Calu3 (cell line): ENCODE measurements at regions of chr3 and their contacts with region 1.

Region 1: DNA sequence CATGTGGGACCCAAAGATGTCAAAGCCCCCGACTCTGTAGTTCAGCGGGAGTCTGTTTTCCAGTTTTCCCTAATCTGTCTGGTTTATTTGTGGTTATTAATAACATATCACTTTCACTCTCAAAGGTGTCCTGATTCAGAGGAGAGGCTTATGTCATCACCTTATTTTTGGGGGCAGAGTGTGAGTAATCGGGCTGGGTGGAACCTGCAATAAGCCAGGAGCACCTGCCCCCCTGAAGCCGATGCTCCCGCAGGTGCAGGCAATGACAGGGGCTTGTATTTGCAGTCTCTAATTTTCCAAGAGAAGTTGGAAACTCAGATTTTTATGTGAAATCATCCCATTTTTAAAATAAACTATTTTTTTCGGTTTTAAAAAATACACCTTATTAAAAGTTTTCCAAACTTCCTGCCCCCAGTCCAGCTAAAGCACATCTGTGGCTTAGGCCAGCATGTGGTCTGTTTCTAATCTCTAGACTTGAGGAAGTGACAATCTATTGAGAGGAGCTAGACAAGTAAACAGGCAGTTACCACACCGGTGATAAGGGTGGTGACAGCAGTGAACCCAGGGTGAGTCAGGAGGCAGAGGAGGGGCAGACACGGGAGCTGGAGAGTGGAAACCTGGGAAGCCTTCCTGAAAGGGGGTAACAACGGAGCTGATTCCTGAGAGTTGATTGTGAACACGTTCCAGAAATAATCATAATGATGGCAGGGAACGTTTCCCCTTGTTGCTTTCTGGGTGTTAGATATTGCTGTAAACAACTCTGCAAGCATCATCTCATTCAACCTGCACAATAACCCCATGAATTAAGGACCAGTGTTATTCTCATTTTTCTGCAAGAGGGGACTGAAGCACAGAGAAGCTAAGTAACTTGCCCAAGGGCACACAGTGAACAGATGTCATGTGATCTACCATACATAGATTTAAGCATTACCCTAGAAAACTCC is 37.3 kb downstream of the BHLHE40 start:
- DNase-seq: peak; percentile 74
- H3K4me3 Mint-ChIP-seq: peak overlapping the region; percentile 41
- H3K27ac Mint-ChIP-seq: peak overlapping the region; percentile 97
- H3K4me1 Mint-ChIP-seq: peaks cover 79% of the 10 kb centered on the region
- H3K27me3 Mint-ChIP-seq: no peaks in the 10 kb centered on the region
- CTCF ChIP-seq: no peak

Region 2: GRCh38 chr3:4986782-4987537 is 29.5 kb before region 1 on chr3:
- CTCF ChIA-PET with region 1: interaction called, 13 read pairs
- intact Hi-C with region 1: no loop called
- DNase-seq: peak; percentile 97
- H3K4me3 Mint-ChIP-seq: peak overlapping the region; percentile 76
- H3K27ac Mint-ChIP-seq: peak overlapping the region; percentile 97
- H3K4me1 Mint-ChIP-seq: peaks cover 34% of the 10 kb centered on the region
- H3K27me3 Mint-ChIP-seq: no peaks in the 10 kb centered on the region
- CTCF ChIP-seq: no peak

Region 3: DNA sequence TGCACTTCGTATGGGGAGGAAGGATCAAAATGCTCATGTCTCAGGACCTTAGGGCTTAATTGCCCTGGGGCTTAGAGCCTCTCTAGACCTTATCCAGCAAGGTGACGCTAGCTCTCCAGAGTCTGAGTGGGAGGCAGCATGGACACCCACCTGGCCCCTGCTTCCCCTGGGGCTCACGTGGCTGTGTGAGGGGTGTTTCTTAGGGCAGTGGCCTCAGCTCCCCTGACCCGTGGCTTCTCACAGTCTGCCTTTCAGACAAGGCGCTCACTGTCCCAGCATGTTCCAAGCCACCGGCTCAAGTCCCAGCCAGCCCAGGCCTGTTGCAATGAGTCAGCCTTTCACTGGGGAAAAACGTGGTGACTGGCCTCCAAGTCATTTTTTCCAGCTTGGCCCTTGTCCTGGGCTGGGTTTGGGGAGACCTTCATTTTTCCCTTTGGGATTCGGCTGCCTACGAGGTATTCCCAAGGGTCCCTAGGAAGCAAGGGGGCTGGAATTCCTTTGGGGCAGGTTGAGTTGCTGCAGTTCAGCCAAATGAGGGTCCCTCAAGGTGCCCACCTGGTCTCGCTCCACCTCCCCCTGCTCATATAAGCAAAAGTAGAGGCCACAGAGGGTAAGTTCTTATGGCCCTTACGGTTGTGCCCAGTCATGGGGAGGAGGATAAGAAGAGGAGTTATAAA is 21.5 kb before region 1 on chr3:
- CTCF ChIA-PET with region 1: interaction called, 4 read pairs
- intact Hi-C with region 1: loop called (anchors 2 kb)
- DNase-seq: peak; percentile 70
- H3K4me3 Mint-ChIP-seq: no peak overlapping the region
- H3K27ac Mint-ChIP-seq: peak overlapping the region; percentile 74
- H3K4me1 Mint-ChIP-seq: peaks cover 23% of the 10 kb centered on the region
- H3K27me3 Mint-ChIP-seq: no peaks in the 10 kb centered on the region
- CTCF ChIP-seq: no peak